ENCODE measurements at regions of chr2 and their contacts with region 1.

Region 1: DNA sequence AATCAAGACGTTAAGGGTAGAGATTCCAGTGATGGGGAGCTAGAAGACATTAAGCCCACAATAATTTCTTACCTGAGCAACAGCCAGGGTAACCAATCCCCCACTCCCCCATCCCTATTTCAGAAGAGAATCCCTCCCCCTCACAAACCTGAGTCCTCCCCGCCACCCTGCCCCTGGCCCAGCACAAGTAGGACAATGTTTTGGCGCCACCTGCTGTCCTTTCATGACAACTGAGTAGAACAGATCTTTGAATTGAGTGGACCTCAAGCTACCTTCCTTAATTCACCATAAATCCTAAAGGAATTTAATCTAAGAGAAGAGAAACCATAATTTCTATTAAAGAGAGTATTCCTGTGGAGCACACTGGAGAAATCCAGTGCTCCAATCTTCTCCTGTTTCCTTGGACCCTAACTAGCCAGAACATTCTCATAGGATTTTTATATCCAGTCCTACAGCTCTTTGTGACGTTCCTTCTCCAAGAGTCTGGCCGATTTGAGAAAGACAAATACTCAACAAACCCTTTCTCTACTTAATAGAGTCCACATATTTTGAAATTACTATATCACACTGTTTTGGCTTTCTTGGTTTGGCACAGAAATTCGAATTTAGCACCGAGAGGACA is 41.1 kb downstream of the NHEJ1 start:
- DNase-seq: peak; percentile 35
- H3K4me3 ChIP-seq: no peak overlapping the region
- H3K27ac ChIP-seq: no peak overlapping the region
- H3K4me1 ChIP-seq: peaks cover 37% of the 10 kb centered on the region
- H3K27me3 ChIP-seq: no peaks in the 10 kb centered on the region
- CTCF ChIP-seq: peak; percentile 67 to 75

Region 2: DNA sequence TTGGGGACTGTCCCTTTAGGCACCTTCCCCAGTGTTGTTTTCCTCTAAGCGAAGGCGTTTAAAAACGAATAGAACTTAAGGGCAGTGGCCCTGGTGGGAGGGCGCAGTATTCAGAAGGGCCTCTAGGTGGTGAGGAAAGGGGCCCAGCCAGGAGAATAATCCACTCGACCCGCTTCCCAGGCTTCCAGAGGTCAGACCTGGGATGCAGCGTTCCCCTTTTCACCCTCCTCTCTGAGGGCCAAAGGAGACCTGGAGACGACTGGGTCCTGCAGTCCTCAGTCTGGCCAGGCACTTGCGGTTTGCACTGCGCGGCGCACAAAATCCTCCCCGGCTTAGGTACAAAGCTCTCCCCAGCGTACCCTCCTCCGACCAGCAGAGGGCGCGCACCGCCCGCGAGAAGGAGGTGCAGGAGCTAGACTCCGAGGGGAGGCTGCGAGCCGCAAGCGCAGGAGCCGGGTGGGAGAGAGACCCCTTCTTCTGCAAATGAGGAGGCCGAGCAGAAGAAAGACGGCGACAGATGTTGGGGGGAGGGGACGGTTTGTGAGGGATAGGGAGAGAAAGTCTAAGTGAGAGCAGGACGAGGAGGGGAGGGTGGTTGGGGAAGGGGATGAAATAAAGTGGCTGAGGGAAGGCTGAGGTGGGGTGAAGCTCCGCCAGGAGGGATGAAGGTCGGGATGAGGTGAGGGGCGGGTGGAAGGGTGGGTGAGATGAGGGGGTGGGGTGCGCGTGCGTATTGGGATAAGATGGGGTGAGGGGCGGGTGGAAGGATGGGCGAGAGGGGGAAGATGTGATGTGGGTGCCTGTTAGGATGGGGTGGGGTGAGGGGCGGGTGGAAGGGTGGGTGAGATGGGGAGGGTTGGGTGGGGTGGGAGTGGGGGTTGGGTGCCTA is 139.4 kb before region 1 on chr2:
- CTCF ChIA-PET with region 1: interaction called, 31 read pairs
- dilution Hi-C with region 1: no loop called
- in situ Hi-C with region 1: no loop called
- intact Hi-C with region 1: no loop called
- DNase-seq: peak; percentile 67
- H3K4me3 ChIP-seq: peak overlapping the region in 1 of 3 experiments; percentile 37
- H3K27ac ChIP-seq: no peak overlapping the region
- H3K4me1 ChIP-seq: peaks cover 15% of the 10 kb centered on the region
- H3K27me3 ChIP-seq: peaks cover 41% of the 10 kb centered on the region
- CTCF ChIP-seq: peak; percentile 79 to 86

Region 3: GRCh38 chr2:218995972-218996711 is 123.4 kb before region 1 on chr2:
- CTCF ChIA-PET with region 1: interaction called, 3 read pairs
- dilution Hi-C with region 1: no loop called
- in situ Hi-C with region 1: no loop called
- intact Hi-C with region 1: loop called (anchors 1 kb)
- DNase-seq: peak; percentile 70
- H3K4me3 ChIP-seq: peak overlapping the region; percentile 26 to 54 (median 49)
- H3K27ac ChIP-seq: no peak overlapping the region
- H3K4me1 ChIP-seq: peaks cover 17% of the 10 kb centered on the region
- H3K27me3 ChIP-seq: peaks cover 6% of the 10 kb centered on the region
- CTCF ChIP-seq: peak; percentile 64 to 90

Region 4: DNA sequence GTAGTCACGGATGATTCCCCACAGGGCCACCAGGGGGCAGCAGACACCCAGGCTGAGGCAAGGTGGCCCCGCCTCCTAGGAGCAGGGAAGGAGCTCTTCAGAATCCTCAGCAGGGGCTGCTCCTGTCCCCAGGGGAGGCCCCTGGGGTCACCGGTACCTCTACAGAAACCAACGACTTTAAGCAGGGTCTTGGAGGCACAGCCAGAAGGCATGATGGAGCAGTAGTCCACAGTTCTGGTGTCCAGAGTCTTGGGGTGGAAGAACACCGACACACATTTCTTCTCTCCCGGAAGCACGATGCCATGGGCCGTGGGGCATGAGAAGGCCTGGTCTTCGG is 89.7 kb before region 1 on chr2:
- CTCF ChIA-PET with region 1: interaction called, 6 read pairs
- dilution Hi-C with region 1: no loop called
- in situ Hi-C with region 1: loop called in 1 of 2 experiments (anchors 5 kb)
- intact Hi-C with region 1: loop called (anchors 1 kb)
- DNase-seq: peak; percentile 43
- H3K4me3 ChIP-seq: no peak overlapping the region
- H3K27ac ChIP-seq: no peak overlapping the region
- H3K4me1 ChIP-seq: no peaks in the 10 kb centered on the region
- H3K27me3 ChIP-seq: peaks cover 3% of the 10 kb centered on the region
- CTCF ChIP-seq: peak; percentile 90 to 97

Region 5: GRCh38 chr2:219073413-219074129 is 46.0 kb before region 1 on chr2:
- CTCF ChIA-PET with region 1: interaction called, 7 read pairs
- dilution Hi-C with region 1: no loop called
- in situ Hi-C with region 1: no loop called
- intact Hi-C with region 1: loop called (anchors 1 kb)
- DNase-seq: peak; percentile 41
- H3K4me3 ChIP-seq: no peak overlapping the region
- H3K27ac ChIP-seq: no peak overlapping the region
- H3K4me1 ChIP-seq: peaks cover 10% of the 10 kb centered on the region
- H3K27me3 ChIP-seq: no peaks in the 10 kb centered on the region
- CTCF ChIP-seq: peak; percentile 57 to 74

Region 6: DNA sequence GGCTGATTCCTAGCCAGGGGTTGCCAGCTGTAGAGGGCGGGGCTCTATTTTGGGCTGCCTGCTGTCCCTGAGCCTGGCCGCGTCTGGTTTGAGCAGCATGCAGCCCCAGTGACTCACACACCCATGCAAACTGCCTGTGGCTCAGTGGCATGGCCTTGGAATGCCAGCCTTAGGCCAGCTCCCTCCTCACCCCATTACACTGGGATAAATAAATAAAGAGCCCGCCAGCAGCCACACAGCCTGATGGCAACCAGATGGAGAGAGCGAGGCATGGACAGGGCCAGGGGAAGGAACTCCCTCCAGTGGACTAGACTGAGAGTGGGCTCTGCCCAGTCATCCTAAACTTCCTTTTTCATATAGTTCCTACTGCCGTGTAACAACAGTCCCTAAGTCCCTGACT is 22.8 kb after region 1 on chr2:
- CTCF ChIA-PET with region 1: interaction called, 13 read pairs
- dilution Hi-C with region 1: no loop called
- in situ Hi-C with region 1: no loop called
- intact Hi-C with region 1: no loop called
- DNase-seq: peak; percentile 77
- H3K4me3 ChIP-seq: no peak overlapping the region
- H3K27ac ChIP-seq: no peak overlapping the region
- H3K4me1 ChIP-seq: peaks cover 11% of the 10 kb centered on the region
- H3K27me3 ChIP-seq: no peaks in the 10 kb centered on the region
- CTCF ChIP-seq: peak in 1 of 2 donors; percentile 12